ENCODE measurements at regions of chr12 and their contacts with region 1.

Region 1: GRCh38 chr12:121626087-121626852 is at the start of gene ORAI1:
- DNase-seq: peak; percentile 83 to 96 (median 92)
- H3K4me3 ChIP-seq: peak within 1 kb of the TSS; percentile 55 to 89 (median 72)
- H3K27ac ChIP-seq: peak within 1 kb of the TSS; percentile 61 to 96 (median 90)
- H3K27me3 ChIP-seq: no peaks in the 10 kb centered on the region
- CTCF ChIP-seq: peak in 32 of 56 donors; percentile 5 to 57 (median 26)
- total RNA-seq, gene ORAI1: 1.9 to 9.7 (median 4.6) TPM

Region 2: DNA sequence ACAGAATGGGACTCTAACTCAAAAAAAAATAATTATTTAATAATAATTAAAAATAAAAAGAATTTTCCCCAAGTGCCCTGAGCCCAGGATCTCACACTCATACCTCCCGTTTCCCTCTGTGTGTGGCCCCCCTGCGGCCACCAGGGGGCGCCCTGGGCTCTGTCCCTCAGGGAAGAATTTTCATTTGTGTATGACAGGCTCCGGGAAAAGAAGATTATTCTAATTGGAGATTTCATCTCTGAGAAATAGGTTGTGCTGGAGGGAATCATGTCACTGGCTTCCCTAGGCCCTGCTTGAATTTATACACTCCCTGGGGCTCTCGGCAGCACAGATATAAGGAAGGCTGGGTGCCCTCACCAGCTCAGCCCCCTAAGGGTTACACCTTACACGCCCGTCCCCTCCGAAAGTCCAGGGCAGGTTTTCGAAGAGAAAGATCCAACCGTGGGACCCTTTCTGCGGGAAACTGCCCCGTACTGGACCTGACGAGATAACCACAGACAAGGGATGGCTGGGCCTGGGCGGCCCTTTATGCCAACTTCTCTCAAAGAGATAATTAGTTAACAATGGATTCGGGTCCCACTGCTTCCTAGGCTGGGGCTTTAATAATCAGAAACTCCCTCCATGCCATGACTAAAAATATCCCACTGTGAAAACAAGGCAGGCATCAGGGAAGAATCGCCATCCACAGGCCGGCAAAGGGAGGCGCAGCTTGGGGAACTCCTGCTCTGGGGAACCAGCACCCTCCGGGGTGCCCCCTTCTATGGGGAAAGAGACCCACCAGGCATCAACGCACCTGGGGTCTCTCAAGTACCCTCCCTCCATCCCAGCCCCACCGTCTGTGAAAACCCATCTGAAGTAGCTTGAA is 126.1 kb before region 1 on chr12:
- intact Hi-C with region 1: loop called in 1 of 2 experiments (anchors 2 kb)
- DNase-seq: peak; percentile 75 to 88 (median 82)
- H3K4me3 ChIP-seq: peak overlapping the region in 51 of 59 donors; percentile 6 to 58 (median 38)
- H3K27ac ChIP-seq: peak overlapping the region in 52 of 59 donors; percentile 8 to 90 (median 71)
- H3K27me3 ChIP-seq: no peaks in the 10 kb centered on the region
- CTCF ChIP-seq: peak; percentile 91 to 100 (median 97)

Region 3: GRCh38 chr12:121579981-121580868 is 46.0 kb before region 1 on chr12:
- intact Hi-C with region 1: loop called (anchors 1 to 5 kb)
- DNase-seq: peak; percentile 71 to 82 (median 76)
- H3K4me3 ChIP-seq: peak overlapping the region; percentile 42 to 90 (median 75)
- H3K27ac ChIP-seq: peak overlapping the region; percentile 72 to 97 (median 94)
- H3K27me3 ChIP-seq: no peaks in the 10 kb centered on the region
- CTCF ChIP-seq: peak in 3 of 56 donors; percentile 3 to 17 (median 4)

Region 4: GRCh38 chr12:121688966-121689365 is 62.7 kb after region 1 on chr12:
- intact Hi-C with region 1: loop called (anchors 1 to 5 kb)
- DNase-seq: no peak
- H3K4me3 ChIP-seq: no peak overlapping the region
- H3K27ac ChIP-seq: no peak overlapping the region
- H3K27me3 ChIP-seq: no peaks in the 10 kb centered on the region
- CTCF ChIP-seq: no peak

Region 5: GRCh38 chr12:121719926-121720414 is 93.7 kb after region 1 on chr12:
- intact Hi-C with region 1: no loop called
- DNase-seq: peak in 2 of 10 donors; percentile 50 to 63
- H3K4me3 ChIP-seq: no peak overlapping the region
- H3K27ac ChIP-seq: peak overlapping the region in 12 of 59 donors; percentile 0 to 53 (median 37)
- H3K27me3 ChIP-seq: no peaks in the 10 kb centered on the region
- CTCF ChIP-seq: no peak

Region 6: DNA sequence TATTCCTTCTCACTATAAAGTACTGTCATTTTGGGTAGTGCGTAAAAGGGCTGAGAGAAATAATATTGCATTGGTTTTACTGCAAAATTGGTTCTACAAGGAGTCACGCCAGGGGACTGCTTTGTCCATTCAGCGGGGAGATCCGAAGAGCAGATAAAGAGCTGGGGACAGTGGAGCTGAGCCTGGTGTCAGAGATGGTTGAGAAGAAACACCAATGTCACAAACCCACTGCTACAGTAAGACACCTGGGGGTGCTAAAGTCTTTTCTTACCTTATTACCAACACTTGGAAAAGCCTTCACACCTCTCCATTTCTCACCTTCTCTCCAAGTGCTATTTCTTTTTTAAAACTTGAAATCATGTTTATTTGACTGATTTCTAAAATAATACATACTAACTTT is 533.6 kb after region 1 on chr12:
- intact Hi-C with region 1: no loop called
- DNase-seq: no peak
- H3K4me3 ChIP-seq: no peak overlapping the region
- H3K27ac ChIP-seq: no peak overlapping the region
- H3K27me3 ChIP-seq: no peaks in the 10 kb centered on the region
- CTCF ChIP-seq: no peak

Measured in dorsolateral prefrontal cortex (tissue), 120 donors.